A549 (cell line): ENCODE measurements at regions of chr5 and their contacts with region 1.

Region 1: GRCh38 chr5:180784497-180785097 is 18.0 kb downstream of the MGAT1 start:
- DNase-seq: peak; percentile 84 to 85
- ATAC-seq: peak; percentile 71 to 85; a peak in 5 of 6 replicates
- H3K4me3 ChIP-seq: no peak overlapping the region
- H3K27ac ChIP-seq: no peak overlapping the region
- H3K4me1 ChIP-seq: peaks cover 15% of the 10 kb centered on the region
- CTCF ChIP-seq: peak; percentile 77
- EP300 ChIP-seq: no peak
- POLR2A ChIP-seq: no peak
- RAD21 ChIP-seq: peak; percentile 88 to 92

Region 2: DNA sequence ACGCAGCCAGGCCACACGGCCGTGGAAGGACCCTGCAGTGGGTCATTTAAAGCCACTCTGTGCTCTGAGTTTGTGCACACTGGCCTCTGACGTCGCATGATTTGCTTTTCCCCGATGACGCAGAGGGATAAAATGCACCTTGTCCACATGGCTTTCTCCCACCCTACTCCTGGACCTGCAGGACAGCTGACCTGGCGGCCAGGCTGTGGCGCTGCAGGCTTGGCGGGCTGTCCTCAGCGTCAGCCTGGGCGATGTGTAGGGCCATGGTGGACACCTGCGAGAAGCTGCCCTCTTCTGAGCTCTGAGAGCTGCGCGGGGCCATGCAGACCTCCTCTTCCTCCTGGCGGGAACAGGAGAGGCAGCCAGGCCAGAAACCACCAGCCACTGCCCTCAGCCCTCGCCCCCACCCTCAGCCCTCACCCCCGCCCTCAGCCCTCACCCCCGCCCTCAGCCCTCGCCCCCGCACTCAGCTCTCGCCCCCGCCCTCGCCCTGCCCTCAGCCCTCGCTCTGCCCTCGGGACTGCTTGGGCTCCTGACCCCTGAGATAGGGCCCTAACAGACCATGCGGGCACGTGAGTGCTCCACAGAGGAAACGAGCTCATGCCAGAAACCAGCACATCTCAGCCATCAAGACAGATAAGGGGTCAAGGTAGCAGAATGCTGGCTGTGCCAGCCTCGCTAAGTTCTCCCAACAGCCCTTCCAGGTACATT is 173.3 kb before region 1 on chr5:
- CTCF ChIA-PET with region 1: no interaction called
- POLR2A ChIA-PET with region 1: no interaction called
- DNase-seq: peak; percentile 33 to 69
- ATAC-seq: peak; percentile 42 to 88; a peak in 3 of 6 replicates
- H3K4me3 ChIP-seq: no peak overlapping the region
- H3K27ac ChIP-seq: no peak overlapping the region
- H3K4me1 ChIP-seq: no peaks in the 10 kb centered on the region
- CTCF ChIP-seq: 0 out of 3 replicates have a peak, but pooled peaks have one; percentile 18
- EP300 ChIP-seq: no peak
- POLR2A ChIP-seq: no peak
- RAD21 ChIP-seq: peak; percentile 27 to 53; a peak in 4 of 5 replicates

Region 3: DNA sequence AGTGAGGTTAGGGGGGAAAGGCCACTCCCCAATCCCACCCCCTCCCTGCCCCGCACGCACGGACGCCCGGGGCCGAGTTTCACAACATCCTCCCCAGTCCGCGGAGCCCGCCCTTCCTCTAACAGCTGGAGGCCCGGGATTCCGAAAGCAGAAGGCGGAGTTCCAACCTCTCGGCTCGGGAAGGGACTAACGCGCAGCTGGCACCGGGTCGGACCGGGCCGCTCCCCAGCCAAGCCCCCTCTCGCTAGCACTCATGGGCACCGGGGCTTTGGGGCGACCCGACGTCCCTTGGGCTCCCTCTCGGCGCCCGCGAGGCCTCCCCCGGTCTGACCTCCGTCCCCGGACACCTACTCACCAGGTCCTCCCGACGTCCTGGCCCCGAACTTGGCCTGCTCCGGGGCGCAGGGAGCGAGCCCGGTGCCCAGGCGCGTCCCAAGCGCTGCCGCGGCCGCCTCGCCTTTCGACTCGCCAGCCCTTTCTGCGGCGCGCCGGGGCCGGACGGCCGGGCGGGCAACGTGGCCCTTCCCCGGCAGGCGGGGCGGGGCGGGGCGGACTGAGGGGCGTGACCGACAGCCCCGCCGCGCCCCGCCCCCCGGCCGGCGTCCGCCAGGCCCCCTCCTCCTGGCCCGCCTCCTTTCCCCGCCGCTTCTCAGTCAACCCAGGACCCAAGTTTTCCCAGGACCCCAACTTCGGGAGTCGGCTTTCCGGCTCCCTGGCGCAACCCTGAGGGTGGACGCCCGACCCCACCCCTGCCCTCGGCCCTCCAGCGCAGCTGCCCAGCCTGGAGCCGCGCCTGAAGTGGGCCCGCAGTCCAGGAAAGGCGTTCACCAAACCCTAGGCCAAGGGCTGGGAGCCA is 18.0 kb after region 1 on chr5 and contains the start of gene MGAT1:
- CTCF ChIA-PET with region 1: interaction called, 38 read pairs
- POLR2A ChIA-PET with region 1: no interaction called
- DNase-seq: peak; percentile 74 to 79
- ATAC-seq: peak; percentile 87
- H3K4me3 ChIP-seq: peak within 1 kb of the TSS; percentile 82
- H3K27ac ChIP-seq: peak within 1 kb of the TSS; percentile 90 to 98
- H3K4me1 ChIP-seq: peaks cover 47% of the 10 kb centered on the region
- CTCF ChIP-seq: no peak
- EP300 ChIP-seq: peak in 1 of 2 experiments; percentile 13; a peak in 1 of 5 replicates
- POLR2A ChIP-seq: peak; percentile 88
- RAD21 ChIP-seq: no peak
- polyA plus RNA-seq, gene MGAT1: 53.0 and 56.3 TPM in 2 replicates

Region 4: DNA sequence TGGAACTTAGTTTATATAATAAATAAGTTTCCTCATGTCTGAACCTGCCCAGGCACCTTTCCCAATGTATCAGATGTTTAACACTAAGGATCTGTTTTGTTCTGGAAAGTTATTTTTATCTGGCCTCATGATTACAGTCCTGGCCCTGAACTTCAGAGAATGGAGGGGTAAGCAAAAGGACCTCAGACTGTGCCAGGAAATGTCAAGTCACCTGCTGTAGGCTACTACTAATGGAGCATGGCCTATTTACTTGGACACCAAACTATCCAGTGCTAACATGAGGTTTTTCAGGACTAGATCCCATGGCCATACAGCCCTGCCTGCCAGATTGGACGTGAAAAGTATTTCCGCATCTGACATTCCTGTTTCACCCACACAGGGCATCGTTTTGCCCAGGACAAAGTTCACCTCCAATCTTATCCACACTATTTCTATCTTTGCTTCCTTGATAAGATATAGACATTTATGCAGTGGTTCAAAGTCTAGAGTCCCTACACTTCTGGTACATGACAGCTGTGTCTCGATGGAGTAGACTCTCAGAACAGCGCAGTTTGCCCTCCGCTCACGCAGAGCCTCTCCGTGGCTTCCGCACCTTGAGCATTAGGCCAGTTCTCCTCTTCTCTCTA is 114.1 kb after region 1 on chr5 and contains the start of gene BTNL8:
- CTCF ChIA-PET with region 1: no interaction called
- POLR2A ChIA-PET with region 1: no interaction called
- DNase-seq: no peak
- ATAC-seq: no peak
- H3K4me3 ChIP-seq: no peak within 1 kb of the TSS
- H3K27ac ChIP-seq: no peak within 1 kb of the TSS
- H3K4me1 ChIP-seq: no peaks in the 10 kb centered on the region
- CTCF ChIP-seq: no peak
- EP300 ChIP-seq: no peak
- POLR2A ChIP-seq: no peak
- RAD21 ChIP-seq: no peak
- polyA plus RNA-seq, gene BTNL8: not detected in 2 replicates